ENCODE measurements at regions of chr3 and their contacts with region 1.

Region 1: GRCh38 chr3:50272911-50273693 is 4.2 kb downstream of the SEMA3B start:
- DNase-seq: peak; percentile 93
- ATAC-seq: peak; percentile 76

Region 2: DNA sequence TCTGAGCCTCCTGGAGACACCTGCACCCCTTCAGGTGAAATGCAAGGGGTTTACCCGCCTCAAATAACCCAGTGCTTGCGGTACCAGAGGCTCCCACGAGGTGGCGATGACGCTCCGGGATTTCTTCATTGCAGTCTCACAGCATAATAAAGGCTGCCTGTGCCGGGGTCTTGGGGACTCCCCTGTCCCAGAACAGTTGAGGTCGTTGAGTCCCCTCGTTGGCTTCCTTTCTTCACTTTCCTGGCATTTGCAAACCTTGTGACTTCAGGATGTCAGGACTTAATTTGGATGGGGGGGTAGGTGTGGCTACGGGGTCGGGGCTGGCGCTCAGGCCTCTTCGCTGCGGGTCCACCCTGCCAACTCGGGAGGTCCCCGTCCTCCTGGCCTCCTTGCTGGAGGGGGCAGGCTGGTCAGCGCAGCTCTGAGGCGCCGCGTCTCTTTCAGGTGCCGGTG is 80.4 kb before region 1 on chr3:
- intact Hi-C with region 1: loop called (anchors 2 kb)
- DNase-seq: peak; percentile 80
- ATAC-seq: peak; percentile 54

Region 3: DNA sequence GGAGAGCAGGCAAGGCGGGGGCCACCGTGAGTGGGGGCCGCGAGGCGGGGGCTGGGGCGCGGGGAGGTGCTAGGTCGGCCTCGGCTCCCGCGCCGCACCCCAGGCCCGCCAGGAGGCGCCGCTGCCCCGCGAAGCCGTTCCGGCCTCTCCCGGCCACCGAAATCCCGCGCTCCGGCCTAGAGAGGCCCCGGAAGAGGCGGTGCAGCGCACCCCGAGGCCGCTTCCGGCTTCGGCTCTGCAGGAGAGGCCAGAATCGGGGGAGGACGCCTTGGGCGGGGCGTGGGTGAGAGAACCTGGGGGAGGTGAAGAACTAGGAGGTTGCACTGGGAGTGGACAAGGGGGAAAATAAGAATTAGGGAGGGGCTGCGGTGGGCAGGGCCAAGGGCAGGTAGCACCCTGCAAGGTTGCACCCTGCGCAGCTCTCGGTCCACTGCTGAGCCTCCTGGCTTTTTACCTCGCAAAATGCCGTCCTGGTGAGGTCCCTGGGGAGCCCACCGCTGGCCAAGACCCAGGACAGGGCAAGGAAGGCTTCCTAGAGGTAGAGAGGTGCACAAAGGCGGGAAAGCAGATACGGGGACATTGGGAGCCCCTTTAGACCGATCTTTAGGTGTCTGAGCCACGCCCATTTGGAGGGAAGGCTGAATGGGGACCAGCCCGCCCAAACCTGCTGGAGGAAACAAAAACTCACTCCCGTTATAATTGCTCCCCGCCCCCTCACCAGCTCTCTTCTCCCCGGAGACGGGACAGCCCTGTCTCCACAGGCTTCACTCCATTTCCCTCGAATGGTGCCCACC is 45.5 kb before region 1 on chr3:
- intact Hi-C with region 1: loop called (anchors 2 kb)
- DNase-seq: peak; percentile 96
- ATAC-seq: peak; percentile 94

Region 4: GRCh38 chr3:50321336-50322114 is 48.4 kb after region 1 on chr3:
- intact Hi-C with region 1: loop called (anchors 5 kb)
- DNase-seq: peak; percentile 94
- ATAC-seq: peak; percentile 89

Measured in Right ventricle myocardium superior (tissue), 1 donor.